ENCODE measurements at regions of chr18 and their contacts with region 1.

Region 1: DNA sequence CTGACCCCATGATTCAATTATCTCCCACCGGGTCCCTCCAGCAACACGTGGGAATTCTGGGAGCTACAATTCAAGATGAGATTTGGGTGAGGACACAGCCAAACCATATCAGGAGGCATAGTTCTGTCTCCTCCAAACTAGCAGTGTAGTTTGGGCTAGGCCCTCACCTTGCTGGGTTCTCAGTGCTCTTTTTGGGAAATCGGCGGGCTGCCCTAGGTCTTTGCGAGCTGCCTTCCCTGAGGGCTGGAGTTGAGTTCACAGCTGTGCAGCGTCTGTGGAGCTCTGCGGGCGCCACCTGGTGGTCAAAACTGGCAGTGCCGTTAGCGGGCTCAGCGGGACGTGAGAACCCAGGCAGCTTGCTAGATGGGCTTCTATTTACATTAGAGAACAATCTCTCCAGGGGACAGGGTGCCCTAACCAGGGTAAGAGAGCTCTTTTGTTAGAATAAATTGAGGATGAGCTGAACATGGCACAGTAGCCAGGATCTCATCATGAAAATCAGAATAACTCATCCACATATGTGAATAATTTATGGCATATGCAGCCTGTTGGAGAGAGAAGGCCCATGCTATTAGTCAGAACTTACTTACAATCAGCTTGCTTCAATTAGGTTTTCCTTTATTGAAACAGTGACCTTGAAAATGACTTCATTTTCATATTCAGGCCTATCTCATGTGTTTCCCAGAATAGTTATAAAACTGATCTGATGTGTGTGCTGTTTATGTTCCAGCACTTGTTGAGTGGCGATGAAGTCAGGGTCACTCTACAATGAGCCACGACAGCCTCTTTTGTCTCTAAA is 27.4 kb upstream of the YES1 start:
- DNase-seq: peak; percentile 53
- H3K4me3 ChIP-seq: no peak overlapping the region
- H3K27me3 ChIP-seq: no peaks in the 10 kb centered on the region
- CTCF ChIP-seq: peak; percentile 99

Region 2: DNA sequence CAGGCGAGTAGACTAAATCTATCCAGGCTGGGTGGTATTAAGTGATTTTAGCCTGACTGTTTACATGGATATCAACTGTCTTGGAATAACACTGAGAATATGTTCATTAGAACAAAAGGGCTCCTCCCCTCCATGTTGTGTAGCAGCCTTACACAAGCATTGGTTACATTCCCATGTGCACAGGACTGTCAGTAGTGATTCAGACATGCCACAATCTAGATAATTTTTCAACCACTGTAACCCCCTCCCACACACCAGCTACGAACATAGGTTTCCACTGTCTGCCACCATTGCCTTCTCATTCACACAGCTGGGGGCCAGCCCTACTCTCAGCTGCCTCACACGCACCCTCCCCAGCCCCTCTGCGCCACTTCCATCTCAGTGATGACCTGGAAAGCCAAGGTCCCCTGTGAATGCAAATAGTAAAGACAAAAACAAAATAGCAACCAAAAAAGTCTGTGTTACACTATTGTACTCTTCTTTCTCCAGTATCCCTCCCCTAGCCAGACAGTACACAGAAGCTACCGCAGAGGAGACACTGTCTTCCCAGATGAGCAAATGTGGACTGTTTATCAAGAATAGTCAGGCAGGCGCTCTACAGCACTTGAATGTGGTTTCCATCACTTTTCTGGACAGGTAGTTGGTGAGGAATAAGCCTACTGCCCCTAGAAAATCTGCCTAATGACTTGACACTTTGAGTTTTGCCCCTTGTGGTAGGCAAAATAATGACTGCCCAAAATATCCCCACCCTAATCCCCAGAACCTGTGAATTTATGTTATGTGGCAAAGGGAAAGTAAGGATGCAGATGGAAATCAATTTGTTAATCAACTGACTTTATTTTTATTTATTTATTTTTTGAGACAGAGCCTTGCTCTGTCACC is 209.9 kb before region 1 on chr18:
- CTCF ChIA-PET with region 1: interaction called, 134 read pairs
- POLR2A ChIA-PET with region 1: no interaction called
- DNase-seq: no peak
- H3K4me3 ChIP-seq: no peak overlapping the region
- H3K27me3 ChIP-seq: no peaks in the 10 kb centered on the region; the same call in none of the 2 replicates
- CTCF ChIP-seq: no peak

Region 3: GRCh38 chr18:741931-742512 is 97.4 kb before region 1 on chr18:
- CTCF ChIA-PET with region 1: interaction called, 126 read pairs
- POLR2A ChIA-PET with region 1: no interaction called
- DNase-seq: peak; percentile 3
- H3K4me3 ChIP-seq: no peak overlapping the region
- H3K27me3 ChIP-seq: no peaks in the 10 kb centered on the region
- CTCF ChIP-seq: peak; percentile 63

Measured in BJ (cell line).